Cardiac septum (tissue), 1 donor: ENCODE measurements at regions of chr20 and their contacts with region 1.

Region 1: DNA sequence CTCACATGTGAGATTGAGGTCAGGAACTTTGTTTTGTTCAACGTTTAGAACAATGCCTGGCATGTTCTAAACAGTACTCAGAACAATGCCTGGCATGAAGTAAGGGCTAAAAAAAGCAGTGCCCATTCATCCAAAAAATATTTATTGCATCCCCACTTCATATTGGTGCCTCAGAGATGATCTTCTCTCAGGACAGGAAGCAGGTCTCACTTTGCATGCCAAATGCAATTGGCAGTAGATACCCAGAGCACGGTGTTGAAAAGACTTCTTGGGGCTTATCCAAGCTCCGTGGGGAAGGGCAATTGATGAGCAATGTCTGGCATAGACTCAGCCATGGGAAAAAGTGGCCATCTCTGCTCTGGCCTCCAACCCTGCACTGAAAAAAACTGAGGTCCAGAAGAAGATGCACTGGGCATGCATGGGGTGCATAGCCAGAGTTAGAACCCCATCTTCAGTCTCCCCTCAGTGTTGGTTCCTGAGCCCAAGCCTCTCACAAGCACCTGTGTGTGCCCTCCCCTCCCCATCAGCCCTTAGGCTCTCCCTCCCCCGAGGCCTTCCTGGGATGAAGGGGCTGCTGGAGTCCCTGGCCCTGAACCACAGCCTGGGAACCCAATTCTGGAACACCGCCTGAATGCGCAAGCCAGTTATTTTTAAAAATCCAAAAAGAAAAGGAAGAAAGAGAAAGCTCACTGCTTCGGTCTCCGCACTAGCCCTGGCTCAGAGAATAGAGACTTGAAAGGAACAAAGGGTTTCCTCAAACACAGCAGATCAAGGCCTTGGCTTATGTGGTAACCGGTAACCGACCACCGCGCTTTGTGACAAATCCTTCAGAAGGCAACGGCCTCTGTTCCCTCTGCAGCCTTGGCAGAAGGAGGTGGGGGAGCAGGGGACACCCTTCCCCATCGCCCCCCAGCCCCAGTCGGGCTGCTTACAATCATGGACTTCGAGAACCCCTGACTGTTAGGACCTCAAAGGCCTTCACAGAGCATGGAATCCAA is 78.5 kb upstream of the SIRPA start:
- DNase-seq: peak; percentile 70

Region 2: DNA sequence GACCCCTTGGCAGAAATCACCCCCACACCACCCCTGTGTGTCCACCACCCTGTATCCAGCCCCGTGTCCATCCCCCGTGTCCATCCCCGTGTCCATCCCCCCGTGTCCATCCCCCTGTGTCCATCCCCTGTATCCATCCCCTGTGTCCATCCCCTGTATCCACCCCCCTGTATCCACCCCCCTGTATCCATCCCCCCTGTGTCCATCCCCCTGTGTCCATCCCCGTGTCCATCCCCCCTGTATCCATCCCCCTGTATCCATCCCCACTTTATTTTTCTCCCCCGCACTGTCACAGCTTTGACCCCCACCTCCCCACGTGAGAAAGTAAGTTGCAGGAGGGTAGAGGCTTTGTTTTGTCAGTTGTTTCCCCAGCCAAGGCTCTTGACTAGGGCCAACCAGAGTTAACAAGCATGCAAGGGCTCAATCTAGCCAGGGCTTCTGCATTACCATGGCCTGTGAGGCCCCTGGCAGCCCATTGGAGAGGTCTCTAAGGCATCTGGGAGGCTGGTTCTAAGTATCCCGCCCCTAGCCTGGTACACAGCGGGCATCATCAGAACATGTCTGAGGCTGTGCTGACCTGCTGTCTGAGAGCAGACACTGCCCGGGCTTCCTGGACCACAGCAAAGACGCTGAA is 60.4 kb after region 1 on chr20:
- intact Hi-C with region 1: no loop called
- DNase-seq: no peak

Region 3: DNA sequence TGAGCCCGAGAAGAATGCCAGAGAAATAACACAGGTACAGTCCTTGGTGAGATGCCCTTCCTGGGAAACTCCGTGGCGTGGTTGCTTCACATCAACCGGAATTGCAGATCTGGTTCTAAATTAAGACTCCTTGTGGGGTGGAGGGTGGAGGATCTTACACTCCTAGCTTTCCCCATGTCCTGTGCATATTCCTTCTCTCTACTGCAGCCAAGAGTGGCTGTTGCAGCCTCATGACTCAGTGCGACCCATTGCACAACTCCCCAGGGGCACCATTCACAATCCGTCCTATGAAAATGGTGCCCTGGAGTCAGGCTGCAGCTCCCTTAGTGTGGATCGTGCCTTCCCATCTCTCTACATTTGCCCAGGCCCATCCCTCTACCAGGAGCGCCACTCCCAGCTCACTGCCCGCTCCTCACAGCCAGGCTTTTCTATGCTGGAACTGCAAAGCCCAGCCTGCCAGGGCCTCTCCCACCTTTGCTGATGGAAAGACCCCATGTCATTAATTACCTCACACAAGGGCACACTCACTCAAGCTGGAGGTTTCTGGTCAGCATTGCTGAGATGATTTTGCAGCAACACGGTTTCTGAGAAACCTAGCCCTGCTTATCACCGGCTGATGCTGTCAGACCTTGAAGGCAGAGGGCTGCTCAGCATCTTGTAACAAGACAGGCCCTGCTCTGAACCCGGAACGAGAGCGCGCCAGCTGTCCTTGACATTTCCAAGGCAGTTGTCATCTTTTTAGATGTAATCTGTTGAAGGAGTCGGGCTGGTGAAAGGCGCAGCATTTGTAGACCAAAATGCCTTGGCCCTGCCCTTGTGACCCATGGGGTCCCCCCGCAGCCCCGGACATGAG is 118.3 kb after region 1 on chr20:
- intact Hi-C with region 1: loop called (anchors 2 kb)
- DNase-seq: no peak

Region 4: DNA sequence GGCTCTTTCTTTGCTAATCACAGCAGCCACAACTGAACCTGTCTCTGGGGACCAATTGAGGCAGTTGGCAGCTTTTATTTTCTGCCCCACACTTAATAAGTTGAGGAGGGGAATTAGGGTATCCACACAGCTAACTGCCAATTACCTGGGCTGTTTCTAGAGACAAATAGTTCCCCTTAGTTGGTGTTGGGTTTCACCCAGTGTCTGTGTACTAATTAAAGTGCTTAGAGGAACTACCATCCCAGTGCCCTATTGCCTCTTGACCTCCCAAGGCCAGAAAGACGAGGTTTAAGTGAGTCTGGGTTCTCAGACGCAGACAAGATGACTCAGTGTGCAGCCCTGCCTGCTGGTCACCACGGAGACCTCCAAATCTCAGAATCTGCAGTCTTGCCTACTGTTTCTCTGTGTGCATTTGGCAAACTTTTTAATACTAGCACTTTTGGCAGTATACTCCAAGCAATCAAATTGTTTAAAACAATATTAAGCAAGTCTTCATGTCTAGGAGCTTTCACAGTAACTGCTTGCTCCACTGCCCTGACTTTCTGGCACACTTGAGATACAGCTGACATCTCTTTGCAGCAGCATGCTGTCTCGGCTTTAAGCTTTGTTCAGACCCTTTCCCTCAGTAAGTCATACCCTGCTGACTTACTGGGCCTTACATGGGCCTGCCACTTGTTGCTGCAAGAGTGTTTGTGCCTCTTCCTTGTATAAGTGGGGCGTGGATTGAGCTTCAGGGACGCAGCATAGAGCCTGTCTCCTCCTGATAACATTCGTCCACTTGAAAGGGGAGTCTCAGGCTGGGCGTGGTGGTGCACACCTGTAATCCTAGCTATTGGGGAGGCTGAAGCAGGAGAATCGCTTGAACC is 316.9 kb after region 1 on chr20:
- intact Hi-C with region 1: loop called (anchors 10 kb)
- DNase-seq: no peak